Activated CD8-positive, alpha-beta T cell treated with anti-CD3 and anti-CD28 coated beads for 36 hours (primary cell): ENCODE measurements at regions of chr16 and their contacts with region 1.

Region 1: GRCh38 chr16:9134739-9135138 is 43.3 kb downstream of the HAPSTR1 start:
- DNase-seq: peak; percentile 83
- ATAC-seq: peak; percentile 93
- H3K4me3 Mint-ChIP-seq: no peak overlapping the region
- H3K27ac Mint-ChIP-seq: no peak overlapping the region
- H3K4me1 Mint-ChIP-seq: peaks cover 26% of the 10 kb centered on the region
- H3K27me3 Mint-ChIP-seq: no peaks in the 10 kb centered on the region
- CTCF ChIP-seq: peak; percentile 84

Region 2: GRCh38 chr16:9099131-9099625 is 35.6 kb before region 1 on chr16:
- CTCF ChIA-PET with region 1: interaction called, 15 read pairs
- POLR2A ChIA-PET with region 1: no interaction called
- intact Hi-C with region 1: loop called (anchors 5 kb)
- DNase-seq: peak; percentile 55
- ATAC-seq: peak; percentile 47
- H3K4me3 Mint-ChIP-seq: peak overlapping the region; percentile 58
- H3K27ac Mint-ChIP-seq: peak overlapping the region; percentile 89
- H3K4me1 Mint-ChIP-seq: peaks cover 88% of the 10 kb centered on the region
- H3K27me3 Mint-ChIP-seq: no peaks in the 10 kb centered on the region
- CTCF ChIP-seq: no peak

Region 3: DNA sequence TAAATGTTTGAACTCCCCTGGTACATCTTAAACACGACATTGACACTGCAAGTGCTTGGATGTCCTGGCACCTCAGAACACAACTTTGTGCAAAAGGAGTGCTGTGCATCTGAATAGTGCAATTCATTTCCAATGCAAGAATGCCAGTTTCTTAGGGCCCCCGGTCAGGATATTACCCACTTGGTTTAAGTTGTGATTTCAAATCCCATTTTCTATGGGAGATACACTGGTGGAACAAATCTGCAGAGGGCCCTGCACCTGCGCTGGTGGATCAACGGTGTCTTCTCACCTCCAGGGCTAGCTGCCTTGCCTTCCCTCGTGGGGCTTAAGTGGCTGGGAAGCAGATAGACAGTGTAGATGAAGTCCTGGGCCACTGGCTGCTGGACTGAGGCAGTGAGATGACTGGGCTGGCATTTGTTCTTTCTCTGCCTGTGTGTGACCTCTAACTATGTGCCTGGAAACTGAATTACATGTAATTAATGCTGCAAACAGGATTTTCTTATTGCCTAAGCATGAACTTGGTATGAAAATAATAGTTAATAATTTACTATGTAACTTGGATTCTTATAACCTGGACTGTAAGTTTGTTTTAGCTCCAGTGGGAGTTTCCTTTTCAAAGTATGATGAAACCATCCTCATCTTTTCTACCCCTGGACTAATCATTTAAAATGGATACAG is 22.4 kb before region 1 on chr16:
- CTCF ChIA-PET with region 1: interaction called, 11 read pairs
- POLR2A ChIA-PET with region 1: no interaction called
- intact Hi-C with region 1: no loop called
- DNase-seq: no peak
- ATAC-seq: peak; percentile 25
- H3K4me3 Mint-ChIP-seq: no peak overlapping the region
- H3K27ac Mint-ChIP-seq: peak overlapping the region; percentile 88
- H3K4me1 Mint-ChIP-seq: peaks cover 91% of the 10 kb centered on the region
- H3K27me3 Mint-ChIP-seq: no peaks in the 10 kb centered on the region
- CTCF ChIP-seq: no peak

Region 4: DNA sequence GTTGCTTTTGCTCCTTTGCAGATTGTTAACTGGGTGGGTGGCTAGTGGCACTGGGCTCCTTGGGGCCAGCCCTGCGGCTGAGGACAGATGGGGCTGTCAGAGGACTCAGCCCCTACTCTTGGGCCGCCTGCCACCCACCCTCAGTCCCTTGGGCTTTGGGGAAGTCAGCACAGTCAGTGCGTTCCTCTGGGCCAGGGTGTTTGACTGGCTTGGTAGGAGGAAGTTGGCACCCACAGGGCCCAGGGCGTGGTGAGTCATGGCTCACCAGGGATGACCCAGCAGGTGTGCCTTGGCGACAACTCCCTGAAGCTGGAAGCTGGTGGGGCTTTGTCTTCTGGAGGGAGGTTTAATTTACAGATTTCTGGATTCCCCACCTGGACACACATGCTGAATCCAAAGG is 10.9 kb before region 1 on chr16:
- CTCF ChIA-PET with region 1: interaction called, 14 read pairs
- POLR2A ChIA-PET with region 1: no interaction called
- intact Hi-C with region 1: no loop called
- DNase-seq: peak; percentile 41
- ATAC-seq: no peak
- H3K4me3 Mint-ChIP-seq: no peak overlapping the region
- H3K27ac Mint-ChIP-seq: peak overlapping the region; percentile 66
- H3K4me1 Mint-ChIP-seq: peaks cover 79% of the 10 kb centered on the region
- H3K27me3 Mint-ChIP-seq: no peaks in the 10 kb centered on the region
- CTCF ChIP-seq: no peak

Region 5: GRCh38 chr16:9148374-9149015 is 13.8 kb after region 1 on chr16:
- CTCF ChIA-PET with region 1: interaction called, 12 read pairs
- POLR2A ChIA-PET with region 1: no interaction called
- intact Hi-C with region 1: no loop called
- DNase-seq: no peak
- ATAC-seq: no peak
- H3K4me3 Mint-ChIP-seq: no peak overlapping the region
- H3K27ac Mint-ChIP-seq: no peak overlapping the region
- H3K4me1 Mint-ChIP-seq: peaks cover 2% of the 10 kb centered on the region
- H3K27me3 Mint-ChIP-seq: no peaks in the 10 kb centered on the region
- CTCF ChIP-seq: no peak